MCF 10A (cell line): ENCODE measurements at regions of chr19 and their contacts with region 1.

Region 1: DNA sequence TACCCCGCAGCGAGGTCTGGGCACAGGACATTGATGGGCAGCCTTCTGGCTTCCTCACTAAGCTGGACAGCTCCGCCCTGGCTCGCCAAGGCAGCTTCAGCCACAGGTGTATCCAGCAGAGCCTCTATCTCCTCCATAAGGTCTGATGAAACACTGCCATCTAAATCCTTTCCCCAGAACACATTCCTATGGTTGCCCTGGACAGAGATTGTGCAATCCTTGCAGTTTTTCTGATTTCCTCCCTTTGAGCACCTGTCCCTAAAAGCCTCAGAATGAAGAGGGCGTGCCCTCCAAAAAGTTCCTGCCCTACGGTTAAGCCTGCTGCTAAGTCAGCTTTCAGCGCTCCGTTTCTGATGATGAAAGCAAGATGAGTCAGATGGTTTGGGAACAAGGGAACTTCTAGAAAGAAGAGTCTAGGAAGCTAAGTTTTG is 21.0 kb downstream of the CLEC4M start:
- DNase-seq: peak; percentile 98
- H3K4me3 Mint-ChIP-seq: no peak overlapping the region
- H3K27ac Mint-ChIP-seq: peak overlapping the region; percentile 17
- H3K4me1 Mint-ChIP-seq: peaks cover 18% of the 10 kb centered on the region
- H3K27me3 Mint-ChIP-seq: no peaks in the 10 kb centered on the region
- CTCF ChIP-seq: no peak

Region 2: DNA sequence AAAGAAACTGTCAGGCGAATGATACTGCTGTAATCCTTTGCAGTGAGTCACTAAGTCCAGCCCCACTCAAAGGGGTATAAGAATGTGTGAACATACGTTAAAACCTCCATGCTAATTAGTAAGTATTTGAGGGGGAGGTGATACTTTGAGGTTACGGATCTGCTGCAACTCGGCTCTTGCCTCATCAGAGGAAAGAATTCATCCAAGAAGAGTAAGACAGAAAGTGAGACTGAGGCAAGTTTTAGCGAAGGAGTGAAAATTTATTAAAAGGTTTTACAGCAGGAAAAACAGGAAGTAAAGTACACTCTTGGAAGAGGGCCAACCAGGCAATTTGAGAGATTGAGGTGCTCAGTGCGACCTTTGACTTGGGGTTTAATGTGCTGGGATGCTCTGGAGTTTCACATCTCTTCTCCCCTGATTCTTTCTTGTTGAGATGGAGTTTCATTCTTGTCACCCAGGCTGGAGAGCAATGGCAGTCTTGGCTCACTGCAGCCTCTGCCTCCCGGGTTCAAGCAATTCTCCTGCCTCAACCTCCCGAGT is 11.2 kb before region 1 on chr19:
- CTCF ChIA-PET with region 1: interaction called, 3 read pairs
- POLR2A ChIA-PET with region 1: interaction called, 15 read pairs
- intact Hi-C with region 1: no loop called
- DNase-seq: peak; percentile 63
- H3K4me3 Mint-ChIP-seq: peak overlapping the region; percentile 55
- H3K27ac Mint-ChIP-seq: no peak overlapping the region
- H3K4me1 Mint-ChIP-seq: peaks cover 9% of the 10 kb centered on the region
- H3K27me3 Mint-ChIP-seq: peaks cover 44% of the 10 kb centered on the region
- CTCF ChIP-seq: no peak